CD8-positive, alpha-beta T cell (primary cell): ENCODE measurements at regions of chr6 and their contacts with region 1.

Region 1: DNA sequence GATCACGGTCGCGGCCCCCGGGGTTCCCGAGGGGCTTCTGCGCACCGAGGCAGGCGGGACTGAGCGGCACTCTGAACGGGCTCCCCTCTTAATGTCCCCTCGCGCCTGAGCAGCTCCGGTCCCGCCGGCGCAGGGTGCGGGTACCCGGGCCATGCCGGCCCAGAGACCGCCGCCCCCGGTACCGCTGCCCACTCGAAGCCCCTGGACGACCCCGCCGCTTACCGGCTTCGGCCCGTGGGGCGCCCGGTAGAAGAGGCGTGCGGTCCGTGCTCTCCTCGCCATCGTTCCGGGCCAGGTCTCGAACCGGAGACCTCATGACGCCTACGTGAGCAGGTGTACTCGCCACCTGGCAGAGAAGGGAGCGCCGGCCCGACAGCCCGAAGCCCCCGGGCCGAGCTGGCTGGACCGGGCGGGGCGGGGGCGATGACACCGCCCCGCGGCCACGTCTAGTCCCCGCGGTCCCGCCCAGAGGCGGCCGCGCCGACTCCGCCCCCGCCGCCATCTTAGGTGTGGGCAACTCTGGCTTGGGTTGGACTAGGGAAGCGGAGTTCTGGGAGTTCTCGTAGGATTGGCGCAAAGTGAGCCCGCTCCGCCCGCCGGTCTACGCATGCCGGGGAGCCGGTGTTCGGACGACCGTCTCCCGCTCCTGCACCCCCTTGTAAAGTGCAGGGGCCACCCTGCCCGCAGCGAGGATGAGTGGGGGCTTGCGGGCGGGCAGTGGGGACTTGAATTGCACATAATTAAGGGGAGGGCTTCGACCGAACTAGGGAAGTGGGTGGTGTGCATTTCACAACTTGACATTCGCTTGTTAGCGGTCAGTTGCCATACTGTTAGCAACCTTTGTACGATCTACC is at the start of gene SLC17A5:
- DNase-seq: peak; percentile 81 to 94 (median 88)
- ATAC-seq: peak; percentile 85
- H3K4me3 ChIP-seq: peak within 1 kb of the TSS; percentile 78 to 94
- H3K4me3 Mint-ChIP-seq: peak within 1 kb of the TSS; percentile 99
- H3K27ac ChIP-seq: peak within 1 kb of the TSS; percentile 92 to 95
- H3K27ac Mint-ChIP-seq: peak within 1 kb of the TSS; percentile 97
- H3K4me1 ChIP-seq: peaks cover 20% of the 10 kb centered on the region
- H3K4me1 Mint-ChIP-seq: peaks cover 29% of the 10 kb centered on the region
- H3K27me3 ChIP-seq: no peaks in the 10 kb centered on the region
- H3K27me3 Mint-ChIP-seq: no peaks in the 10 kb centered on the region
- CTCF ChIP-seq: no peak
- total RNA-seq, gene SLC17A5: 4.9 to 5.5 TPM

Region 2: GRCh38 chr6:72622094-72622940 is 1031.5 kb before region 1 on chr6:
- CTCF ChIA-PET with region 1: no interaction called
- POLR2A ChIA-PET with region 1: no interaction called
- intact Hi-C with region 1: loop called (anchors 5 to 10 kb)
- DNase-seq: peak; percentile 34 to 82 (median 59)
- ATAC-seq: peak; percentile 42
- H3K4me3 ChIP-seq: peak overlapping the region; percentile 79 to 80
- H3K4me3 Mint-ChIP-seq: peak overlapping the region; percentile 96
- H3K27ac ChIP-seq: peak overlapping the region in 1 of 2 experiments; percentile 17
- H3K27ac Mint-ChIP-seq: peak overlapping the region; percentile 19
- H3K4me1 ChIP-seq: peaks cover 21% of the 10 kb centered on the region
- H3K4me1 Mint-ChIP-seq: peaks cover 57% of the 10 kb centered on the region
- H3K27me3 ChIP-seq: no peaks in the 10 kb centered on the region
- H3K27me3 Mint-ChIP-seq: no peaks in the 10 kb centered on the region
- CTCF ChIP-seq: peak; percentile 15

Region 3: GRCh38 chr6:73515204-73515655 is 138.6 kb before region 1 on chr6:
- CTCF ChIA-PET with region 1: interaction called, 13 read pairs
- POLR2A ChIA-PET with region 1: interaction called, 112 read pairs
- intact Hi-C with region 1: loop called (anchors 1 to 2 kb)
- DNase-seq: peak in 3 of 9 experiments; percentile 12 to 48 (median 32)
- ATAC-seq: no peak
- H3K4me3 ChIP-seq: no peak overlapping the region
- H3K4me3 Mint-ChIP-seq: peak overlapping the region; percentile 37
- H3K27ac ChIP-seq: peak overlapping the region in 1 of 2 experiments; percentile 55
- H3K27ac Mint-ChIP-seq: peak overlapping the region; percentile 68
- H3K4me1 ChIP-seq: peaks cover 35% of the 10 kb centered on the region
- H3K4me1 Mint-ChIP-seq: peaks cover 50% of the 10 kb centered on the region
- H3K27me3 ChIP-seq: no peaks in the 10 kb centered on the region
- H3K27me3 Mint-ChIP-seq: no peaks in the 10 kb centered on the region
- CTCF ChIP-seq: no peak

Region 4: GRCh38 chr6:73560182-73560732 is 93.5 kb before region 1 on chr6:
- CTCF ChIA-PET with region 1: no interaction called
- POLR2A ChIA-PET with region 1: no interaction called
- intact Hi-C with region 1: no loop called
- DNase-seq: no peak
- ATAC-seq: no peak
- H3K4me3 ChIP-seq: no peak overlapping the region
- H3K4me3 Mint-ChIP-seq: no peak overlapping the region
- H3K27ac ChIP-seq: no peak overlapping the region
- H3K27ac Mint-ChIP-seq: no peak overlapping the region
- H3K4me1 ChIP-seq: no peaks in the 10 kb centered on the region
- H3K4me1 Mint-ChIP-seq: no peaks in the 10 kb centered on the region
- H3K27me3 ChIP-seq: no peaks in the 10 kb centered on the region
- H3K27me3 Mint-ChIP-seq: no peaks in the 10 kb centered on the region
- CTCF ChIP-seq: no peak

Region 5: DNA sequence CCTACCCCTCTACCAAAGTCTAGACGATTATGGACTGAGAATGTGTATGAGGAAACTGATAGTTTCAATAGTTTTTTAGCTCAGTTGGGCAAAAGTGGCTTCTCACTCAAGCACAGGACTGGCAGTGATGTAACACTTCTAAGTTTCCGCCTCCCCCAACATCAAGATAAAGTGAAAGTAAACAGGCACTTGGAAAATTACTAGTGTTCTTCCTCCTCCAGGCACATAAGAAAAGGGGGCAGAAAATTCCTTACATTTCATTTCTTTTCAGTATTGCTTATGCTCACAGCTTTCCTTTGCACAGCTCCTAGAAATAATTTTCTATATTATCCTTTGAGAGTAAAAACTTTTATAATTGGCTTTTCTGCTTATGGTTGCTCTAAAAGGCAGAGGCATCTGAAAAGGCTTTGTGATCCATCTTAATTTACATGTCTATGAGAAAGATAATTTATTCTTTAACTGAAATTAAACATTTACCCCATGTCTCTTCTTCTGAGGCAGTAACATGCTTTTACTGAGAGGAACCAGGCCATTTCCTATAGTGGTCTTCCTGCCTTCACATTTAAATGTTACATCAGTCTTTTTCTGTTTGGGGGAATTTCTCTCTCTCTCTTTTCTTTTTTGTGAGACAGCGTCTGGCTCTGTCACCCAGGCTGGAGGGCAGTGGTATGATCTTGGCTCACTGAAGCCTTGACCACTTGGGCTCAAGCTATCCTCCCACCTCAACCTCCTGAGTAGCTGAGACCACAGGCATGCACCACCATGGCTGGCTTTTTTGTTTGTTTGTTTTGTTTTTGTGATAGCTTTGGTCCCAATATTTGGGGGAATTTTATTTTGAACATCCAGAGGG is 68.0 kb before region 1 on chr6:
- CTCF ChIA-PET with region 1: interaction called, 4 read pairs
- POLR2A ChIA-PET with region 1: no interaction called
- intact Hi-C with region 1: loop called (anchors 2 kb)
- DNase-seq: peak in 7 of 9 experiments; percentile 20 to 87 (median 36)
- ATAC-seq: peak; percentile 82
- H3K4me3 ChIP-seq: peak overlapping the region; percentile 29 to 45
- H3K4me3 Mint-ChIP-seq: peak overlapping the region; percentile 80
- H3K27ac ChIP-seq: peak overlapping the region; percentile 62 to 98
- H3K27ac Mint-ChIP-seq: peak overlapping the region; percentile 99
- H3K4me1 ChIP-seq: peaks cover 15% of the 10 kb centered on the region
- H3K4me1 Mint-ChIP-seq: peaks cover 30% of the 10 kb centered on the region
- H3K27me3 ChIP-seq: no peaks in the 10 kb centered on the region
- H3K27me3 Mint-ChIP-seq: no peaks in the 10 kb centered on the region
- CTCF ChIP-seq: no peak

Region 6: DNA sequence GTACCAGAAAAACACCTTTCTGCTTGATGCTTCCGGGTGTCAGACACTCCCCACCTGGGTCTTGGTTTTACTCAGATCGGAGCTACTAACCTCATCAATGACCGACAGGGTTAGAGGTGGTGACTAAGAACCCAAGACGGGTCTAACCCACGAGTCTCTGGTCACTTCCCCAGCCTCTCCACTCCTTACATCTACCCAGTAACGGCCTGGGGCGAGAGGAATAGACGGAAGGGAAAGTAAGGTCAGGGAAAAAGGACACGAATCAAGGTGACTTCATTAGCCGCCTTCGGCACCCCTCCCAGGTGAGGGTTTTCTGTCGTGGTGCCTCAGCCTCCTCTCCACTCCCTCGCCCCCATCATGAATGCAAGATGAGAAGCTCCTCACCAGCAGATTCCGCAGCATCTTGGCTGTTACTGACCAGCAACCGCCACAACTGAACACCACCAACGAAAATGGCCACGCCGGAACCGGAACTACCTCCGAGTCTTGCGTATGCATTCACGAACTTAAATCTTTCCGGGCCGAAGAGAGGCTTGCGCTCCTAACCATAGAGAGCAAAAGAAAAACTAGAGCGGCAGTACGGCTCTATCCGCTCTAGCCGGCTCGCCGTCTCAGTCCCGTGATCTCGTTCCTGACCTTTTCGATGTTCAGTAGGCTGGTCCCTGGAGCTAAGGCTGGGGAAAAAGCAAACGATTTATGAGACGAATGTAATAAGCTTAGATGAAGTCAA is 1589.7 kb after region 1 on chr6 and contains the start of gene COX7A2:
- CTCF ChIA-PET with region 1: no interaction called
- POLR2A ChIA-PET with region 1: interaction called, 7 read pairs
- intact Hi-C with region 1: loop called (anchors 1 to 2 kb)
- DNase-seq: peak; percentile 71 to 94 (median 87)
- ATAC-seq: peak; percentile 94
- H3K4me3 ChIP-seq: peak within 1 kb of the TSS; percentile 94 to 98
- H3K4me3 Mint-ChIP-seq: peak within 1 kb of the TSS; percentile 99
- H3K27ac ChIP-seq: peak within 1 kb of the TSS; percentile 93 to 97
- H3K27ac Mint-ChIP-seq: peak within 1 kb of the TSS; percentile 100
- H3K4me1 ChIP-seq: peaks cover 6% of the 10 kb centered on the region
- H3K4me1 Mint-ChIP-seq: peaks cover 36% of the 10 kb centered on the region
- H3K27me3 ChIP-seq: no peaks in the 10 kb centered on the region
- H3K27me3 Mint-ChIP-seq: peaks cover 6% of the 10 kb centered on the region
- CTCF ChIP-seq: no peak
- total RNA-seq, gene COX7A2: 221 to 229 TPM

Region 7: GRCh38 chr6:75284632-75285286 is 1631.0 kb after region 1 on chr6 and contains the start of gene TMEM30A:
- CTCF ChIA-PET with region 1: no interaction called
- POLR2A ChIA-PET with region 1: no interaction called
- intact Hi-C with region 1: loop called (anchors 2 kb)
- DNase-seq: peak; percentile 89 to 100 (median 96)
- ATAC-seq: peak; percentile 96
- H3K4me3 ChIP-seq: peak within 1 kb of the TSS; percentile 65 to 97
- H3K4me3 Mint-ChIP-seq: no peak within 1 kb of the TSS
- H3K27ac ChIP-seq: peak within 1 kb of the TSS; percentile 72 to 88
- H3K27ac Mint-ChIP-seq: no peak within 1 kb of the TSS
- H3K4me1 ChIP-seq: peaks cover 47% of the 10 kb centered on the region
- H3K4me1 Mint-ChIP-seq: peaks cover 44% of the 10 kb centered on the region
- H3K27me3 ChIP-seq: no peaks in the 10 kb centered on the region
- H3K27me3 Mint-ChIP-seq: no peaks in the 10 kb centered on the region
- CTCF ChIP-seq: no peak
- total RNA-seq, gene TMEM30A: 19.4 to 27.1 TPM